ENCODE measurements at regions of chr1 and their contacts with region 1.

Region 1: GRCh38 chr1:111507411-111508201 is 4.2 kb upstream of the ADORA3 start:
- DNase-seq: peak; percentile 79 to 89
- H3K4me3 ChIP-seq: peak overlapping the region; percentile 23 to 44
- H3K27ac ChIP-seq: peak overlapping the region; percentile 90 to 96
- H3K4me1 ChIP-seq: peaks cover 0 to 35% (median 29%) of the 10 kb centered on the region in 4 donors
- H3K27me3 ChIP-seq: no peaks in the 10 kb centered on the region
- CTCF ChIP-seq: no peak

Region 2: GRCh38 chr1:111399792-111400610 is 107.6 kb before region 1 on chr1:
- intact Hi-C with region 1: no loop called
- DNase-seq: peak in 1 of 2 donors; percentile 63
- H3K4me3 ChIP-seq: no peak overlapping the region
- H3K27ac ChIP-seq: no peak overlapping the region
- H3K4me1 ChIP-seq: no peaks in the 10 kb centered on the region
- H3K27me3 ChIP-seq: peaks cover 0 to 16% of the 10 kb centered on the region in 2 donors
- CTCF ChIP-seq: peak; percentile 61 to 65

Region 3: DNA sequence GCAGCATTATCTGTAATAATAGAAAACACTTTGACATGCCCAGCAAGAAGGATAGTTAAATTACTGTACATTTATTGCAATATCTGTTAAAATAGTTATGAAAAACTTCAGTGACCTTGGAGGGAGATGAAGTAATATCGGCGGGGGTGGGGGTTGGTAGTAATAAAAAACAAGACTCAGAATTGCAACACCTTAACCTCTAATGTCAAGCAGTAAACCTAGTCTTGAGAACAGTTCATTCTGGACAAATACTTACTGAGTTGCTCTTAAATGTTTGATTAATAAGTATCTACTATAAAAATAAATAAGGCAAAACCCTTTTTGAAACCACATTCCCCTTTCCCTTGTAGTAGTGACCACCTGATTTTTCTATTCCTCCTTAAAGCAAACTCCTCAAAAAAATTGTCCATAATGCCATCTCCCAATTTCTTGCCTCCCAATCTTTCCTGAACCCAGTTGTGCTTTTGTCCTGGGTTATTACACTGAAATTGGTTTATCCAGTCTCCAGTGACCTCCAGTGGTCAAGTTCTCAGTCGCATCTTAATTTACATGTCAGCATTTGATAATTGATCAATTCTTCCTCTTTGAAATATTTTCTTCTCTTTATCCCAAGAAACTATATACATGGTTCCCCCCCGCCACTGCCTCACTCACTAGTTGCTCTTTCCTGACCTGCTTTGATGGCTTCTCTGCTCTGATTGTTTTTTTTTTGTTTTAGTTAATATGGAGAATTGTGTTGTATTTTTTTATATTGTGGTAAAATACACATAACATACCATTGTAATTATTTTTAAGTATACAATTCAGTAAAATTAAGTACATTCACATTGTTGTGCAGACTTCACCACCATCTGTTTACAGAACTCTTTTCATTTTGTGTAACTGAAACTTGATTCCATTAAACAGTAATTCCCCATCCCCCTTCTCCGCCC is 148.7 kb after region 1 on chr1:
- intact Hi-C with region 1: loop called (anchors 2 kb)
- DNase-seq: peak in 1 of 2 donors; percentile 48
- H3K4me3 ChIP-seq: no peak overlapping the region
- H3K27ac ChIP-seq: peak overlapping the region; percentile 26 to 36
- H3K4me1 ChIP-seq: peaks cover 0 to 87% (median 25%) of the 10 kb centered on the region in 4 donors
- H3K27me3 ChIP-seq: no peaks in the 10 kb centered on the region
- CTCF ChIP-seq: peak; percentile 58 to 74

Region 4: GRCh38 chr1:111739194-111739924 is 231.8 kb after region 1 on chr1 and contains the start of gene INKA2:
- intact Hi-C with region 1: loop called (anchors 10 kb)
- DNase-seq: peak; percentile 90 to 96
- H3K4me3 ChIP-seq: peak within 1 kb of the TSS; percentile 76 to 90
- H3K27ac ChIP-seq: peak within 1 kb of the TSS; percentile 96 to 99
- H3K4me1 ChIP-seq: peaks cover 0 to 39% (median 23%) of the 10 kb centered on the region in 4 donors
- H3K27me3 ChIP-seq: no peaks in the 10 kb centered on the region
- CTCF ChIP-seq: peak in 1 of 2 experiments; percentile 4